Activated T-helper 1 cell treated with anti-CD3 and anti-CD28 coated beads, Interleukin-12 subunit alpha, Interleukin-12 subunit beta, Interleukin-2, Interleukin-4 antibody, amounts not matched to agents 30 ng/mL and 10 ng/mL and 1 ng/mL, durations not matched to agents 14 hours and 24 hours and 36 hours (primary cell): ENCODE measurements at regions of chr17 and their contacts with region 1.

Region 1: GRCh38 chr17:4806777-4807604 is at the start of gene PLD2:
- DNase-seq: peak; percentile 89
- H3K4me3 Mint-ChIP-seq: peak within 1 kb of the TSS; percentile 82
- H3K27ac Mint-ChIP-seq: peak within 1 kb of the TSS; percentile 34
- H3K4me1 Mint-ChIP-seq: peaks cover 11% of the 10 kb centered on the region
- H3K27me3 Mint-ChIP-seq: peaks cover 2% of the 10 kb centered on the region
- total RNA-seq, gene PLD2: 16.7 and 22.2 TPM in 2 replicates

Region 2: DNA sequence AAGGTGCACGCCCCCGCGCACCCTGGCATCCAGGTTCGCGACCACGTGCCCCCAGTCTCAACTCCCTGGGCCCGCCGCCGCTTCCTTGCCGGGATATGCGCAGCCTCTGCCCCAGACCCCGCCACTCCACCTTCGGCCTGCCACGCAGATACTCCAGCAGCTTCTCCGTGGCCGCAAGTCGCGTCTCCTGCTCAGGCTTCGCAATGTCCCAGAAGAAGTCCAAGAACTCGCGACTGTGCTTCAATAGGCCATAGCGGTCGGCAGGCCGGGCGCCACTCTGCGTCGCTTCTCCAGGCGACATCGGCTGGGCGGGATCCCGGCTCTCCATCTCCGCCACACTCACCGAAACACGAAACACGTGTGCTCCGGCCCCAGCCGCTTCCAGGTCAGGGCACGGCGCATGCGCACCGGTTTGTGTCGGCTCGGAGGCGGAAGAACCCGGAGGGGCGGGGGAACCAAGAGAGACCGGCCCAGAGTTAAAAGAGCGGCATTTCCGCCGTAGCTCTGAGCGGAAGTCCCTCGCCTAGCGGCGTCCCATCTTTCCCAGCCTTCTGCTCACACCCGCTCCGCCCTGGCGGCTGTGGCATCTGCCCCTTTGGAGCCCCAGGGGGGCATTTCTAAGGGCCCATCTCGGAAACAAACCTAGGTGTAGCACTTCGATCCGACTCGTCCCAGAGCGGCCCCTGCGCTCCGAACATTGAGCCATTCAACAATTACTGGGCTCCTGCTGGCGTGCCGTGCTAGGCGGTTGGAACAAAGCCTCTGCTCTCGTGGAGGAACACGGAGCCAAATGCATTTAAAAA is 251.8 kb before region 1 on chr17 and contains the start of gene MYBBP1A:
- intact Hi-C with region 1: loop called (anchors 5 kb)
- DNase-seq: peak; percentile 96
- H3K4me3 Mint-ChIP-seq: peak within 1 kb of the TSS; percentile 94
- H3K27ac Mint-ChIP-seq: peak within 1 kb of the TSS; percentile 93
- H3K4me1 Mint-ChIP-seq: peaks cover 29% of the 10 kb centered on the region
- H3K27me3 Mint-ChIP-seq: no peaks in the 10 kb centered on the region
- total RNA-seq, gene MYBBP1A: 186 and 195 TPM in 2 replicates

Region 3: DNA sequence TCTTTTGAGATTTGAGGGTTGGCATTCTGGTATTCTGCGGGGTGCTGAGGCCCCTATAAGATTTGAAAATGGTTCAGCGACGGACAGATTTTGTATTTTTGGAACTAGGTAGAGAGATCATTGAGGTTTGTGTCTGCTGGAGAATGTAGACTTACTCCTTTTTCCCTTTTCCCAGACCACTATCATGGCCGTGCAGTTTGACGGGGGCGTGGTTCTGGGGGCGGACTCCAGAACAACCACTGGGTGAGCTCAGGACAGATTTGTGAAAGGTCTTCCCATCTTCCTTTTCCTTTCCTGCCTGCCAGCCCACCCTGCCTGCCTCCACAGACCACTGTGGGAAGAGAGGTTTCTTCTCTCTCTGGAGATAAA is 10.5 kb before region 1 on chr17:
- intact Hi-C with region 1: loop called (anchors 1 kb)
- DNase-seq: no peak
- H3K4me3 Mint-ChIP-seq: peak overlapping the region; percentile 100
- H3K27ac Mint-ChIP-seq: peak overlapping the region; percentile 99
- H3K4me1 Mint-ChIP-seq: peaks cover 7% of the 10 kb centered on the region
- H3K27me3 Mint-ChIP-seq: peaks cover 9% of the 10 kb centered on the region

Region 4: GRCh38 chr17:4895657-4896331 is 88.8 kb after region 1 on chr17:
- intact Hi-C with region 1: no loop called
- DNase-seq: no peak
- H3K4me3 Mint-ChIP-seq: no peak overlapping the region
- H3K27ac Mint-ChIP-seq: no peak overlapping the region
- H3K4me1 Mint-ChIP-seq: peaks cover 10% of the 10 kb centered on the region
- H3K27me3 Mint-ChIP-seq: peaks cover 8% of the 10 kb centered on the region